BJ (cell line): ENCODE measurements at regions of chrX and their contacts with region 1.

Region 1: GRCh38 chrX:153539171-153539978 is 21.9 kb downstream of the ATP2B3 start:
- DNase-seq: no peak
- H3K4me3 ChIP-seq: no peak overlapping the region
- H3K27me3 ChIP-seq: no peaks in the 10 kb centered on the region; the same call in 1 of the 2 replicates
- CTCF ChIP-seq: peak; percentile 90

Region 2: DNA sequence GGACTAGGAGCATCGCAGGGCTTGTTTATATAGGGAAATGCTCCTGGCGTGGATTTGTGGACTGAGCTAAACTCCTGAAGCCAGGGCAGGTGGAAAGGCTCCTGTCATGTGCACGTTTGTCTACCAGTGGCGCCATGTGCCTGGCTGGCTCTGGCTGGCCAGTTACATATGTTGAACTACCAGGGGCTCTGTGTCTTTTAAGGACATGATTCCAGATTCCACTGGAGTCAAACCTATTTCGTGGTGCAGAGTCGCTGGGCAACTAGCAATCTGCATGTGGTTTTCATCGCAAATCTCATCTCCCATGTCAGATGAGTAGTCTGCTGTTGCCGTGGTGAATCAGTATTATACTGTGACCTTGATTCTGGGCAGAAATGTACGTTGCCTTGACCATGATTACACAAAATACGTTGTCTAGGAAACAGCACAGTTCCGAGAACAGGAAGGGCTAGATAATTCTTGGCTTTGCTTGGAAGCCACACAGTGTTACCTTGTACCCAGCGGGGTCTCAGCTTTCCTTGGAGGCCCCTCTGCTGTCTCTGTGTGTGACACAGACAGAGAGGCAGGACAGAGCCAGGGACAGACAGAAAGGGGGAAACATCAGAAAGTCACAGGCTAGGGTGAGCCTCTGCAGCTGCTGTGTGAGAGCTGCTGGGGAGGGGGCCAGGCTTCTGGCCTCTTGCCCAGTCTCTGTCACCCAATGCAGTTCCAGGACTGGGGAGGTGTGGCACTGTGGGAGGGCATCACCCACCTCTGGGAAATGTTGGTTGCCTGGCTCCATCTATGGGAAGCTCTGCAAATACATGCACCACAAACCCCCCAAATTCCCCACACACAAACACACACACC is 157.5 kb before region 1 on chrX:
- CTCF ChIA-PET with region 1: no interaction called
- POLR2A ChIA-PET with region 1: no interaction called
- DNase-seq: peak; percentile 65
- H3K4me3 ChIP-seq: no peak overlapping the region
- H3K27me3 ChIP-seq: no peaks in the 10 kb centered on the region
- CTCF ChIP-seq: peak; percentile 20; the same call in 1 of the 2 replicates

Region 3: DNA sequence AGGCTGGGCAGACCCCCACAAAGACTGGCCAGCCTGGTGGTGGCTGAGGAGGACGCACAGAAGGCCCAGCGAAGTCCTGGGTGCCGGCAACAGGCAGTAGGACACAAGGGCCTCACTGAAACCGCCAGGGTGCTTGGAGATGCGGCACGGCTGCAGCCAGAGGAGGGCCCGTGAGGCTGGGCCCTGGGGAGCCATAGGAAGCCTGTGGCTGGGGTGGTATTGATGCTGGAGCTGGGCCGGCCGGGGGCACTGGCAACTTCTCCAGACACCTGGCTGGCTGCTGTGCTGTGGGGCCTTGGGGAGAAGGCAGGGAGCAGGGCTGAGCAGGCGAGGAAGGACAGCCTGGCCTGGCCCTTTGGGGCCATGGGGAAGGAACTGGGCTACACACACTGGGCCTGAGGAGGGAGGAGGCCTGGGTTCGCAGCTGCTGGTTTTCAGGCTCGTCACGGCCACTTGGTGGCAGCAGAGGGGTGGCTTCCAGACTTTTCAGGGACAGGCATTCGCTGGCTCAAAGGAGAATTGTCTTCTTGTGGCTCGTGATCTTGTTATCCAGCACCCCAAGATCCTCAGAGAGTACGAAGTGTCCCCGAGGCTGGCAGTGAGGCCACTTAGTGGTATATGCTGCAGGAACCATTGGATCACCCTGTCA is 15.3 kb after region 1 on chrX:
- CTCF ChIA-PET with region 1: interaction called, 15 read pairs
- POLR2A ChIA-PET with region 1: no interaction called
- DNase-seq: no peak
- H3K4me3 ChIP-seq: no peak overlapping the region
- H3K27me3 ChIP-seq: no peaks in the 10 kb centered on the region
- CTCF ChIP-seq: peak; percentile 72

Region 4: DNA sequence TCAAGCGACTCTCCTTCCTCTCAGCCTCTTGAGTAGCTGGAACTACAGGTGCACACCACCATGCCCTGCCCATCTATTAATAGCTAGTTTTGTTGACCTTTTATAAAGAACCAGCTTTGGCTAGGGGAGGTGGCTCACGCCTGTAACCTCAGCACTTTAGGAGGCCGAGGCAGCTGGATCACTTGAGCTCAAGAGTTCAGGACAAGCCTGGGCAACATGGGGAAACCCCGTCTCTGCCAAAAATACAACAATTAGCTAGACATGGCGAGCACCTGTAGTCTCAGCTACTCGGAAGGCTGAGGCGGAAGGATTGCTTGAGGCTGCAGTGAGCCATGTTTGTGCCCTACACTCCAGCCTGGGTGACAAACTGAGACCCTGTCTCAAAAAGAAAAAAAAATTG is 758.9 kb after region 1 on chrX:
- CTCF ChIA-PET with region 1: no interaction called
- POLR2A ChIA-PET with region 1: no interaction called
- DNase-seq: no peak
- H3K4me3 ChIP-seq: no peak overlapping the region
- H3K27me3 ChIP-seq: no peaks in the 10 kb centered on the region
- CTCF ChIP-seq: no peak